ENCODE measurements at regions of chr22 and their contacts with region 1.

Region 1: DNA sequence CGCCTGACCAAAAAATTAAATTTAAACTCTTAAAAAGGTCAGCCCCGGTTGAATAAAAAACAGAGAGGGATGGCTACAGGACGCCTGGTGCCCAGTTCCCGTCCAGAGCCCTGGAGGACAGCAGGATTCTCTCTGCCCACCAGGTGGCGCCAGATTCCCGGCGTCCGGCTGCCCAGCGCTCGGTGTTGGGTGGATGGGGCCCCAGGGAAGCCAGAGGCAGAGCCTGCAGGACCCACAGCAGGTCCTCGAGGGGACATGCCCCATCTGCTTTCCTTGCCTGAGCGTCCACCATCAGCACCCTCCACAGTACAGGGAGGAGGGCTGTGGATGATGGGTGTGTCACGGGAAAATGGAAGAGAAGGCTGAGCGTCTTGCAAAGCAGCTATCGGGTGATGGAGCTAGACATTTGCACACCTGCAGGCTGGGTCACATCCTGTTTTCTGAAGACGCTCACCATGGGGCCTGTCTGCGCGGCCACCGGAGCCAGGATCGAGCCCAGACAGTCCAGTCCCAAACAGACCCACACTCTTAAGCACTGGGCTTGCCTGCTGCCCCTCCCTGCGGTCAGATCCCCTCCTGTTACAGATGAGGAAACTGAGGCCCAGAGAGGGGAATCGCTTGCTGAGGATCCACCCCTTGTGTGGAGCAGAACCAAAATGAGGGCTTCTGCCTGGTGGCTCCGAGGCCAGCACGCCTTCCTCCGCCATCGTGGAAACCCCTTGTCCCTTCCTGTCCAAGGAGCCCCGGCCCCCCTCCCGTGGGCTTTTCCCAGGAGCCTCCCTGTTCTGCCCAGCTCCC is 18.5 kb upstream of the CBX7 start:
- DNase-seq: peak; percentile 86
- CTCF ChIP-seq: peak; percentile 98

Region 2: GRCh38 chr22:39148747-39149561 is 22.1 kb before region 1 on chr22:
- CTCF ChIA-PET with region 1: interaction called, 12 read pairs
- POLR2A ChIA-PET with region 1: no interaction called
- DNase-seq: peak; percentile 86
- CTCF ChIP-seq: no peak

Region 3: GRCh38 chr22:39155421-39155820 is 15.6 kb before region 1 on chr22:
- CTCF ChIA-PET with region 1: interaction called, 31 read pairs
- POLR2A ChIA-PET with region 1: no interaction called
- DNase-seq: no peak
- CTCF ChIP-seq: no peak

Region 4: GRCh38 chr22:39193861-39194497 is 23.0 kb after region 1 on chr22:
- CTCF ChIA-PET with region 1: interaction called, 12 read pairs
- POLR2A ChIA-PET with region 1: no interaction called
- DNase-seq: no peak
- CTCF ChIP-seq: no peak

Region 5: GRCh38 chr22:39215426-39216120 is 44.5 kb after region 1 on chr22:
- CTCF ChIA-PET with region 1: interaction called, 15 read pairs
- POLR2A ChIA-PET with region 1: no interaction called
- DNase-seq: peak; percentile 68
- CTCF ChIP-seq: peak; percentile 44

Region 6: GRCh38 chr22:39306581-39307361 is 135.7 kb after region 1 on chr22:
- CTCF ChIA-PET with region 1: interaction called, 131 read pairs
- POLR2A ChIA-PET with region 1: interaction called, 12 read pairs
- DNase-seq: no peak
- CTCF ChIP-seq: peak; percentile 47

Measured in GM10248 (cell line).